ENCODE measurements at regions of chr2 and their contacts with region 1.

Region 1: DNA sequence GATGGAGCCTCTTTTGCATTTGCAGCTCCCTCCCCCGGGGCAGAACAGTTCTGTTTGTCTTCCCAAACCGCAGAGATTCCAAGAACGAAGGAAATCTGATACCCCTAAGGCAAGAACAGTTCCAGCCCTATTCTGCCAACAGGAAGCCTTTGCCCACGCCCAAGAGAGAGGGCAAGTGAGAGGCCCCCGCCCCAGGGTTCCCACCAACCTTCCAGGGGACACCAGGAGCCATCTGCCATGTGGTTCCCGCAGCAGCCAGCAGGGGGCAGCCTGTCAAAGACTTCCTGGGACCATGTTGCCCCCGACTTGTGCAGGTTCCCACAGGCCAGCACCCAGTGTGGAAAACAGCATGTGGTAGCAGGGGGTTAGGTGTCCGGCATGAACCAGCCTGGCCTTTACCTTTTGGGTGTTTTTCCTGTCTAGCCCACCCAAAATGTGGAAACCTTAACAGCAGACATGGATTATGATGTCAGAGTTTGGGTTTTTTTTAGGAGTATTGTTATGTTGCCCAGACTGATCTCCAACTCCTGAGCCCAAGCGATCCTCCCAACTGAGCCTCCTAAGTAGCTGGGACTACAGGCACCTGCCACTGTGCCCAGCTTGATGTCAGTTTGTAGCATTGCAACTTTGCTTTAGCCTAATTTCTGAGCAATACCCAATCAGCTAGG is 21.7 kb upstream of the EFHD1 start:
- DNase-seq: peak; percentile 19
- H3K4me3 ChIP-seq: no peak overlapping the region
- H3K27ac ChIP-seq: no peak overlapping the region
- H3K4me1 ChIP-seq: no peaks in the 10 kb centered on the region
- H3K27me3 ChIP-seq: no peaks in the 10 kb centered on the region
- CTCF ChIP-seq: peak; percentile 86 to 88
- POLR2A ChIP-seq: no peak

Region 2: GRCh38 chr2:232592772-232593395 is 18.8 kb before region 1 on chr2:
- CTCF ChIA-PET with region 1: interaction called, 4 read pairs
- POLR2A ChIA-PET with region 1: no interaction called
- dilution Hi-C with region 1: no loop called
- intact Hi-C with region 1: loop called (anchors 1 kb)
- DNase-seq: peak; percentile 70
- H3K4me3 ChIP-seq: no peak overlapping the region
- H3K27ac ChIP-seq: peak overlapping the region; percentile 3
- H3K4me1 ChIP-seq: peaks cover 10% of the 10 kb centered on the region
- H3K27me3 ChIP-seq: no peaks in the 10 kb centered on the region
- CTCF ChIP-seq: no peak
- POLR2A ChIP-seq: no peak

Region 3: GRCh38 chr2:232623783-232624727 is 12.4 kb after region 1 on chr2:
- CTCF ChIA-PET with region 1: interaction called, 11 read pairs
- POLR2A ChIA-PET with region 1: no interaction called
- dilution Hi-C with region 1: no loop called
- intact Hi-C with region 1: no loop called
- DNase-seq: no peak
- H3K4me3 ChIP-seq: no peak overlapping the region
- H3K27ac ChIP-seq: no peak overlapping the region
- H3K4me1 ChIP-seq: no peaks in the 10 kb centered on the region
- H3K27me3 ChIP-seq: peaks cover 3 to 6% of the 10 kb centered on the region in 2 experiments
- CTCF ChIP-seq: no peak
- POLR2A ChIP-seq: no peak

Region 4: DNA sequence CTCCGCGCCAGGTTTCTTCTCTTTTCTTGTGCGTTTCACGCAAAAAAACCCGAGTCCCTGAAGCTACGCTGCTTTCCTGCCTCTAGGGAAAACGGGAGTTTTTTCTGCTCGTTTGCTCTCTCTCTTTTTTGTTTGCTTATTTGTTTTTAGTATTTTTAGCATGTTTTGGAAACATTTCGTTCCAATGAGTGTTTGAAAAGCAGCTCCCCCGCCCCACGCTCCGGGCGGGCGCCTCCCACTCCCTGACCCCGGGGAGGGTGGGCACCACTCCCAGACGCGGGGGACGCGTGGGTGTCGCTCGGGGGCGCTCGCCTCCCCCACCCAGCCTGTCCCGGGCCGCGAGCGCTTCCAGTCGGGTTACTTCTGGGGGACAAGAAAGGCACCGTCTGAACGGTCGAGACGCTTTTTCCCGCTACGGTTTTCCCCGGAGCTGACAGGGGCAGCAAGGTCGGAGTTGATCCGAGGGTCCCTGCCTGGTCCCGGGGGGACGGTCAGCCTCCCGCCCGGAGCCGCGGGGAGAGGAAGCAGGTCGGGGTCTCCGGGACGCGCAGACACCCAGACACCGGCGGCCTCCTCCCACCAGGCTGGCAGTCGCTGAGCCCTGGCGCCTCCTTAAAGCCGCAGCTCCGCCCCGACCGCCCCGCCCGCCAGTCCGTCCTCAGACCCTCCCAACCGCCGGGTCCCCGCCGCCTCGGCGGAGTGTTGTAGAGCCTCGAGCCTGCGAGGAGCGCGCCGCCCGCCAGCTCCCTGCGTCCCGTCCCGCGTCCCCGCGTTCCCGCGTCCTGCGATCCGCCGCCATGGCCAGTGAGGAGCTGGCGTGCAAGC is 21.4 kb after region 1 on chr2 and contains the start of gene EFHD1:
- CTCF ChIA-PET with region 1: interaction called, 11 read pairs
- POLR2A ChIA-PET with region 1: no interaction called
- dilution Hi-C with region 1: no loop called
- intact Hi-C with region 1: no loop called
- DNase-seq: peak; percentile 65
- H3K4me3 ChIP-seq: peak within 1 kb of the TSS; percentile 1 to 45 (median 29)
- H3K27ac ChIP-seq: no peak within 1 kb of the TSS
- H3K4me1 ChIP-seq: peaks cover 4% of the 10 kb centered on the region
- H3K27me3 ChIP-seq: peaks cover 24 to 37% of the 10 kb centered on the region in 2 experiments
- CTCF ChIP-seq: no peak
- POLR2A ChIP-seq: no peak
- total RNA-seq, gene EFHD1: not detected in 2 replicates

Region 5: DNA sequence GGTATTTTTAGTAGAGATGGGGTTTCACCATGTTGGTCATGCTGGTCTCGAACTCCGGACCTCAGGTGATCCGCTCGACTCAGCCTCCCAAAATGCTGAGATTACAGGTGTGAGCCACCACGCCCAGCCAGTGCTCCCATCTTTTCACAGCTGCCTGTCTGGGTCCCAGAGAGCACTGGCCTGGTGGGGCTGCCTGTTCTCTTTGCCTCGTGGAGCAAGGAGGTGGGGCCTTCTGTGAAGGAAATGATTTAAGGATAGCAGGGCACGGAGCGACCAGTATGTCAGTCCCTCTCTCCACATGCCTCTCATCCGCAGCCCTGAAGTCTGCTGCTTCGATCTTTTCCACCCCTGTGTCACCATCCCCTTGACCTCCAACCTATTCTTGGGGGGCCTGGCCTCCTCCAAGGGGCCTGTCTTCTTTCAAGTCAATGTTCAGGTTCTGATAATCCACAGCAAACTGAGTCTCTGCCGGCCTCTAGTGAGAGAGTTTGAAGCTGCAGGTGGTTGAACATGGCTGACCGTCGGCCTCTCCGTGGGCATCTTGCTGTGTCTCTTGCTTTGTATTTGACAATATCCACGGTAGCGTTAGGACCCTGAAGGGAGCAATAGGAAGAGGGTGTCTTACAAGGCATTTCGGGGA is 57.2 kb after region 1 on chr2:
- CTCF ChIA-PET with region 1: interaction called, 27 read pairs
- POLR2A ChIA-PET with region 1: no interaction called
- dilution Hi-C with region 1: no loop called
- intact Hi-C with region 1: loop called (anchors 2 kb)
- DNase-seq: peak; percentile 28
- H3K4me3 ChIP-seq: no peak overlapping the region
- H3K27ac ChIP-seq: no peak overlapping the region
- H3K4me1 ChIP-seq: no peaks in the 10 kb centered on the region
- H3K27me3 ChIP-seq: peaks cover 0 to 4% of the 10 kb centered on the region in 2 experiments
- CTCF ChIP-seq: peak; percentile 18 to 47
- POLR2A ChIP-seq: no peak

Region 6: DNA sequence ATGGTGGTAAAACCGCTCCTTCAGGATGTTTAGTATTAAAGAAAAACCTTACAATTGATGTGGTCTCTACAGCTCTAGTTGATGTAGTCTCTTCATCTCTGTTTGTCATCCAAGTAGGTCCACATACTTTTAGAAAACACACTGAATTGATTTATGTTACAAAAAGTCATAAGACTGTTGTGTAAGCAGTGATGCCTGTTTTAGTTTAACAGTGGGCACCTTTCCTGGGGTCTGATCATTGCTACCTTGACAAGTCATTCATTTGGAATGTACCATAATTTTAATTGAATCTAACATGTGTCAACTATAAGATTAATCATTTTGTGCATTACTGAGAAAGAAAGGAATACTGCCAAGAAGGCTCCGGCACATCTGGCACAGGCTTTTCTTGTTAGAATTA is 119.8 kb after region 1 on chr2:
- CTCF ChIA-PET with region 1: no interaction called
- POLR2A ChIA-PET with region 1: no interaction called
- dilution Hi-C with region 1: no loop called
- intact Hi-C with region 1: no loop called
- DNase-seq: no peak
- H3K4me3 ChIP-seq: no peak overlapping the region
- H3K27ac ChIP-seq: no peak overlapping the region
- H3K4me1 ChIP-seq: no peaks in the 10 kb centered on the region
- H3K27me3 ChIP-seq: no peaks in the 10 kb centered on the region
- CTCF ChIP-seq: no peak
- POLR2A ChIP-seq: no peak

Region 7: DNA sequence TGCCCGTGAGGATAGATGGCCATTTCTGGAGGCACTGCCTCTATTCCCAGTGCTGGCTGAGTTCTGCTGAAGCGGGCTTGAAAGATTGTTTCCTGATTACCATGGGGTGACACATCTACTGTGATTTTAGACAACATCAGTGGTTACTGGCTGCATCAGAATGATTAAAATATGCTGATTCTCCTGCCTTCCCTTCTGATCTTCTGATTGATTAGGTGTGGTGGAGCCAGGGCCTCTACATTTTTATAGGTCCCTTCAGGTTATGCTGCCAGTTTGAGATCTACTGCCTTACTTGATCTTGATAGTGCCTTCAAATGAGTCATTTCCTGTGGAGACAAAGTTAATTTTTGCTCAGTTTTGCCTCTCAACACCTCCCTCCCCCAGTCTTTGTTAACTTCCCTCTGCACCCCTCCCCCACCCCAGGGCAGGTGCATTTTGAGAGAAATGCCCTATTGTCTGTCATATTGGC is 226.8 kb after region 1 on chr2:
- CTCF ChIA-PET with region 1: no interaction called
- POLR2A ChIA-PET with region 1: no interaction called
- dilution Hi-C with region 1: no loop called
- intact Hi-C with region 1: loop called (anchors 5 kb)
- DNase-seq: peak; percentile 77
- H3K4me3 ChIP-seq: no peak overlapping the region
- H3K27ac ChIP-seq: peak overlapping the region; percentile 48
- H3K4me1 ChIP-seq: peaks cover 40% of the 10 kb centered on the region
- H3K27me3 ChIP-seq: no peaks in the 10 kb centered on the region
- CTCF ChIP-seq: no peak
- POLR2A ChIP-seq: peak; percentile 36